MCF 10A (cell line): ENCODE measurements at regions of chr1 and their contacts with region 1.

Region 1: GRCh38 chr1:68770817-68771216 is 273.9 kb upstream of the DEPDC1 start:
- DNase-seq: no peak
- H3K4me3 Mint-ChIP-seq: no peak overlapping the region
- H3K27ac Mint-ChIP-seq: no peak overlapping the region
- H3K4me1 Mint-ChIP-seq: no peaks in the 10 kb centered on the region
- H3K27me3 Mint-ChIP-seq: no peaks in the 10 kb centered on the region
- CTCF ChIP-seq: no peak

Region 2: DNA sequence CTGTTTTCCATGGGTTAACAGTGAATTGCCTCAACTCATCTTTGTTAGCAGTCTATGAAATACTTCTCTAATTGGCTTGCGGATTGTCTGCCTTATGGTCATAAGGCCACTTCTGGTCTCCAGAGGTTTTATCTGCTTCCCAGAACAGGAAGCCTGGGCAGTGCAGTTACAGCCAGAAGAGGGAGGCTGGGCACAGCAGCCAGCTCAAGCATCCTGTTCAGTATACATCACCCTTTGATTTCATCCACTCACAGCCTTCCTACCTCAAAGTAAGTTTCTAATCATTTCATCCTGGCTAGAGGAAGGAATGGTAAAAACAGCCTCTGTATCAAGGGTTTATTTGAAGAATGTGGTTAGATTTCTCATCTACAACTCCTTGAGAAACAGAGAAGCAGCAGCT is 37.5 kb after region 1 on chr1:
- CTCF ChIA-PET with region 1: no interaction called
- POLR2A ChIA-PET with region 1: no interaction called
- intact Hi-C with region 1: no loop called
- DNase-seq: no peak
- H3K4me3 Mint-ChIP-seq: no peak overlapping the region
- H3K27ac Mint-ChIP-seq: no peak overlapping the region
- H3K4me1 Mint-ChIP-seq: no peaks in the 10 kb centered on the region
- H3K27me3 Mint-ChIP-seq: peaks cover 24% of the 10 kb centered on the region
- CTCF ChIP-seq: no peak

Region 3: DNA sequence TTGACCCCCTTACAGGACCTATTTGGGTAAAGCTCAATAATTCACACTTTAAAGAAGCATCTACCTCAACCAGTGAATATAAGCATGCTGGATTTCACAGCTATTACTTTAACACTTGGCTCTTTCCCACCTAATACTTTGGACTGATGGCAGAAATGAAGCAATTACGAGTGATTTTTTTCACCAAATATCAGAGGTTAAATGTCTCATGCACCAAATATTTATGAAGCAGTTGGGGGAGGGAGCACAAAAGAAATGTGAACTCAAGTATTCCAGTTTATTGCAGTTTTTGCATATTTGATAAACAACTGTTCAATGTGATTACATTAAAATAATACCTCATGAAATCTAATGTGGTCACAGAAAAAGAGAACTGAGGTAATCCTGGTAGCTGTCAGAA is 1020.5 kb after region 1 on chr1:
- CTCF ChIA-PET with region 1: no interaction called
- POLR2A ChIA-PET with region 1: no interaction called
- intact Hi-C with region 1: loop called (anchors 5 kb)
- DNase-seq: no peak
- H3K4me3 Mint-ChIP-seq: no peak overlapping the region
- H3K27ac Mint-ChIP-seq: no peak overlapping the region
- H3K4me1 Mint-ChIP-seq: no peaks in the 10 kb centered on the region
- H3K27me3 Mint-ChIP-seq: peaks cover 59% of the 10 kb centered on the region
- CTCF ChIP-seq: no peak